ENCODE measurements at regions of chr5 and their contacts with region 1.

Region 1: DNA sequence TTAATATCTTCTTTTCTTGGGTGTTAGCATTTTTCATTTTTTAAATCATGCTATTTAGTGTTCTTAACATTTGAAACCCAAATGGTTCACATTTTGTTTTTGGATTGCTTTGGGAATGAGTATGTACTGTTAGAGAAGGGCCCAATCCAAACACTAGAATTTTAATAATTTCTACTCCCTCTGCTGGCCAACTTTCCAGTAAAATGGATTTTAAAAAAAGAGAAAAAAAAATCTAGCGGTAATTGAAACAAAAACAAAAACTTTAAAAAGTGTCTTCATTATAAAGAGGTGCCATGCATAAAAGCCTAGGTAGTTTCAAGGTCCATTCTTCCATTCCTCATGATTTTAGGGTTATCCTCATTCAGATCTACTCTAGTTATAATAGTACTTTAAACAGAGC is 32.1 kb upstream of the RICTOR start:
- DNase-seq: peak; percentile 31
- H3K4me3 Mint-ChIP-seq: no peak overlapping the region
- H3K27ac Mint-ChIP-seq: no peak overlapping the region
- H3K4me1 Mint-ChIP-seq: peaks cover 27% of the 10 kb centered on the region
- H3K27me3 Mint-ChIP-seq: no peaks in the 10 kb centered on the region
- CTCF ChIP-seq: peak; percentile 24

Region 2: GRCh38 chr5:39005566-39006232 is 100.6 kb before region 1 on chr5:
- CTCF ChIA-PET with region 1: interaction called, 4 read pairs
- POLR2A ChIA-PET with region 1: no interaction called
- intact Hi-C with region 1: loop called (anchors 1 kb)
- DNase-seq: peak; percentile 37
- H3K4me3 Mint-ChIP-seq: no peak overlapping the region
- H3K27ac Mint-ChIP-seq: no peak overlapping the region
- H3K4me1 Mint-ChIP-seq: peaks cover 8% of the 10 kb centered on the region
- H3K27me3 Mint-ChIP-seq: no peaks in the 10 kb centered on the region
- CTCF ChIP-seq: peak; percentile 41

Region 3: DNA sequence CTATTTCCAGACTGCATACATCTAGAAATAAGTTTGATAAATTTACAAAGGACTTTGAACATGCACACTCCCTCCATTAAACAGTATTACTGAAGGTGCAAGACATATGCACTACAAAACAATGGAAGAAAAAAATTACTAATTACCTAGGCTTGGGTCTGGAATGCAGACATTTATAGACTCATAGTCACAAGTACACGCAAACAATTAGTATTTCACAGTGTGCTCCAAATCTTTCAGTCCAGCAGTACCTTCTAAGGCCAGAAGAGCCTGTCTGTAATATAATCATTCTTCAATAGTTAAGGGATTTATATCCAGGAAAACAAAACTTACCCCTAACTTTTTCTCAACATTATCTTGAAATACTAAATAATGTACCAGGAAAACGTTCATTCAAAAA is 43.3 kb before region 1 on chr5:
- CTCF ChIA-PET with region 1: no interaction called
- POLR2A ChIA-PET with region 1: no interaction called
- intact Hi-C with region 1: no loop called
- DNase-seq: no peak
- H3K4me3 Mint-ChIP-seq: no peak overlapping the region
- H3K27ac Mint-ChIP-seq: peak overlapping the region; percentile 43
- H3K4me1 Mint-ChIP-seq: peaks cover 23% of the 10 kb centered on the region
- H3K27me3 Mint-ChIP-seq: no peaks in the 10 kb centered on the region
- CTCF ChIP-seq: no peak